Heart left ventricle (tissue), 16 donors: ENCODE measurements at regions of chr16 and their contacts with region 1.

Region 1: GRCh38 chr16:3129137-3130131 is 5.4 kb upstream of the ZNF213 start:
- DNase-seq: peak; percentile 77 to 84 (median 80)
- ATAC-seq: peak; percentile 76 to 83 (median 78)
- H3K4me3 ChIP-seq: peak overlapping the region; percentile 11 to 68 (median 54)
- H3K27ac ChIP-seq: peak overlapping the region; percentile 8 to 87 (median 76)
- H3K4me1 ChIP-seq: peaks cover 3 to 59% (median 34%) of the 10 kb centered on the region in 12 donors
- H3K27me3 ChIP-seq: no peaks in the 10 kb centered on the region
- CTCF ChIP-seq: peak in 11 of 12 donors; percentile 88 to 97 (median 92)
- POLR2A ChIP-seq: no peak

Region 2: DNA sequence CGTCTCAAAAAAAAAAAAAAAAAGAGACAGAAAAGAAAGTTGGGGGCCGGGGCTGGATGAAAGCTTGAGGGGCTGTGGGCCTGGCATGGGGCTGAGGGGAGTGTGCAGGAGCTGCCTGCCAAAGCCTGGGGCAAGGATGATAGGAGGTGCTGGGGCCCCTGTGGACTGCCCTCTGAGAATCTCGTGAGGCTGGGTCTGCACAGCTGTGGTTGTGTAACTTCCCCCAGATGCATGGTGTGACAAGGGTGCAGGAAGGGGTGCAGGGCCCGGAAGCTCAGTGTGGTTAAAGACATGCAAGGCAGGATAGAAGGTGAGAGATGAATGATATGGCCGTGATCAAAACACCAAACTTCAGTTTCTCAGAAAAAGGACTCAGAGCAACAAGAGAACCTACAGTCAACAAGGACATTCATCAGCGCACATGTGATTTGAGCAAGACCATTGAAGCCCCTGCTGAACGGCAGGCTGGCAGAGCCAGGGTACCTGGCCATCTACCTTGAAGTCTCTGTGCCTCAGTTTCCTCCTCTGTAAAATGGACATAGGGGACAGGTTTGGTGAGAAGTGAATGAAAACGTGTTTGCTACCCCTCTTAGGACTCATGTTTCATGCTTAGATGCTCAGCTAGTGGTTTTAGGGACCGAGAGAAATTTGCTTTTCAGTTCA is 54.4 kb before region 1 on chr16:
- intact Hi-C with region 1: no loop called
- DNase-seq: peak in 2 of 5 donors; percentile 34 to 45
- ATAC-seq: peak in 3 of 4 donors; percentile 30 to 76 (median 46)
- H3K4me3 ChIP-seq: no peak overlapping the region
- H3K27ac ChIP-seq: peak overlapping the region in 4 of 12 donors; percentile 29 to 83 (median 50)
- H3K4me1 ChIP-seq: peaks cover 0 to 31% (median 0%) of the 10 kb centered on the region in 12 donors
- H3K27me3 ChIP-seq: no peaks in the 10 kb centered on the region
- CTCF ChIP-seq: no peak
- POLR2A ChIP-seq: no peak

Region 3: GRCh38 chr16:3094289-3095027 is 35.0 kb before region 1 on chr16:
- intact Hi-C with region 1: loop called in 4 of 10 experiments (anchors 5 kb)
- DNase-seq: no peak
- ATAC-seq: no peak
- H3K4me3 ChIP-seq: no peak overlapping the region
- H3K27ac ChIP-seq: no peak overlapping the region
- H3K4me1 ChIP-seq: peaks cover 0 to 15% (median under 1%) of the 10 kb centered on the region in 12 donors
- H3K27me3 ChIP-seq: peaks cover 0 to 11% (median 0%) of the 10 kb centered on the region in 9 donors
- CTCF ChIP-seq: peak; percentile 23 to 58 (median 49)
- POLR2A ChIP-seq: no peak

Region 4: DNA sequence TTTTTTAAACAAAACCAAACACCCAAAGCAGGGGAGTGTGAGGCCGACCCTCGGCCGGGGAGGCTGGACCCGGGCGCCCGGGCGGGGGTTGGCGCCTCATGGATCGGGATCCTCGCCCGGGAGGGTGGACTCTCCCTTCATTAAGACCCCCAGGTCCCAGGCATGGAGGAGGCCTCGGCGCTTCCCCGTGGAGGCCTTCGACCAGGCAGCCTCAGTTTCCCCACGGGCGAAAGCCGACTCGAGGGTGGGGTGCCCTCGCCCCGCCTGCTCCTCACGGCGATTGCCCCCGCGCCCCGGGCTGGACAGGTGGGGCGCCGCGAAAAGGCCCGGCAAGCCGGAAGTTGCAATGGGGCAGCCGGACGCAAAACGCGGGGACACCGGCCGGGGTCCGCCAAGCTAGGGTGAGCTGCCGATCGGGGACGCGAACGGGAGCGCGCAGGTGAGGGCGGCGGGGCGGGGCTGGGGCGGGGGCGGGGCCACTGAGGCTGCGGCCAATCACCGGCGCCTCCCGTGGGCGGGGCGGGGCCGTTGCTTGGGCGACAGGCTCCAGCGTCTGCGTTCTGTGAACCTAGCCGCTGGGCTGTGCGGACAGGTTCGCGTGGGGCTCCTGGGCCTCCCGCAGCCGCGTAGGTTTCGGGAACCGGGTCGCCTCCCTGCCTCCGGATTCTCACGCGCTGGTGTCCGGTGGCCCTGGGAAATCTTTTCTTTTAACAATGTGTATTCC is 23.1 kb before region 1 on chr16:
- intact Hi-C with region 1: loop called in 2 of 10 experiments (anchors 2 kb)
- DNase-seq: peak; percentile 91 to 94 (median 92)
- ATAC-seq: peak; percentile 86 to 97 (median 95)
- H3K4me3 ChIP-seq: peak overlapping the region; percentile 48 to 79 (median 67)
- H3K27ac ChIP-seq: peak overlapping the region; percentile 73 to 93 (median 86)
- H3K4me1 ChIP-seq: peaks cover 4 to 33% (median 16%) of the 10 kb centered on the region in 12 donors
- H3K27me3 ChIP-seq: no peaks in the 10 kb centered on the region
- CTCF ChIP-seq: peak in 1 of 12 donors; percentile 14
- POLR2A ChIP-seq: peak in 1 of 2 donors; percentile 46

Region 5: DNA sequence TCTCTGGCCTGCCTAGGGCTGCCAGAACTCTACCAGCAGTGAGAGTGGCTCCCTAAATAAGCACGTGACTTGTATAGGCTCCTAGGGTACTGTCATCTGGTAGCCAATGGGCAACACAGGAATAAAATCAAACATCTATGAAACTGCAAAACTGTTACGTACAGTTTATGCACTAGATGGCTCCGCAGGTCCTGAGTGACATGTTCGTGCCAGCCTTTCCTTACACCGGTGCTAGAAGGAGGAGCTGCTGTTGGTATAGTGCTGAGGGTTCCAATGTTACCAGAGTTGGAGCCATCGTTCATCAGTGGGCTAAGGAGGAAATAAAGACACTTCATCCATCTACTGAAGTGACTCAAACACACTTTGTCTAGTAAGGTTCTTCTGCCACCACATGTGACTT is 651.1 kb after region 1 on chr16:
- intact Hi-C with region 1: no loop called
- DNase-seq: no peak
- ATAC-seq: peak in 2 of 4 donors; percentile 62 to 68
- H3K4me3 ChIP-seq: no peak overlapping the region
- H3K27ac ChIP-seq: no peak overlapping the region
- H3K4me1 ChIP-seq: peaks cover 0 to 10% (median 0%) of the 10 kb centered on the region in 12 donors
- H3K27me3 ChIP-seq: no peaks in the 10 kb centered on the region
- CTCF ChIP-seq: peak in 2 of 12 donors; percentile 7 to 18
- POLR2A ChIP-seq: no peak